T-cell (primary cell): ENCODE measurements at regions of chr7 and their contacts with region 1.

Region 1: DNA sequence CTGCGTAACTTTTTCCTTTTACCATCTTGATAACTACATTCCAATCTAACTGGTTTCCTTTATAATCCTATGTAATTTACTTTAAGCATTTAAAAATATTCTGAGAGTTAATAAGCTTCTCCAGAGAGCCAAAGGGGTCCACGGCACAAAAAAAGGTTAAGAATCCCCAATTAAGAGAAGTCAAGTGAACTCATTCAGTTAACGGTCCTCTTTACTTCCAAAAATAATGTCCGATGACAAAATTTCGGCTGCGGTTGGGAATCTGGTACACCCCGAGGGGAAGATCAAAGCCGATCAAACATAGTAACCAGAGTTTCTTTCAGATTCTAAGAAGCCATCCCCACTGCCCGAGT is 425 bp downstream of the ZC3HC1 start:
- DNase-seq: peak in 1 of 35 experiments; percentile 5
- ATAC-seq: no peak
- H3K4me3 ChIP-seq: peak overlapping the region; percentile 76 to 87
- H3K4me3 Mint-ChIP-seq: peak overlapping the region; percentile 98 to 99 (median 99)
- H3K27ac ChIP-seq: peak overlapping the region; percentile 58
- H3K27ac Mint-ChIP-seq: peak overlapping the region; percentile 82 to 91
- H3K4me1 ChIP-seq: peaks cover 5 to 13% of the 10 kb centered on the region in 2 experiments
- H3K4me1 Mint-ChIP-seq: peaks cover 8 to 19% (median 16%) of the 10 kb centered on the region in 3 donors
- H3K27me3 ChIP-seq: no peaks in the 10 kb centered on the region
- H3K27me3 Mint-ChIP-seq: no peaks in the 10 kb centered on the region

Region 2: DNA sequence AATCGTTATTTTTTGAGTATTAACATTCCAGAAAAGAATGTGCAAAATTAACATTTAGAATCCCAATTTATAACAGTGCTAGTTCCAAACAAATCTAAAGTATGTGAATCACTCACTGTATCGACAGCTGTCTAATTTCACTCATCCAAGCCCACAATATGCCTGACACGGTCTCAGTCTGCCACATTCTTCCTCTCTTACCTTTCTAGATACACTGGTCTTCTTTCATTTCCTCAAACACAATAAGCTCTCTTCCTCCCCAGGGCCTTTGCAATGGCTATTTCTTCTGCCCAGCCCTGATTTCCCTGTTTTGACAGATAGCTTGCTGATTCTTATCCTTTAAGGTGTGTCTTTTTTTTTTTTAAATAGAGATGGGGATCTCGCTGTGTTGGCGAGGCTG is 146.8 kb before region 1 on chr7:
- CTCF ChIA-PET with region 1: no interaction called
- POLR2A ChIA-PET with region 1: interaction called in 1 of 2 experiments, 13 read pairs
- DNase-seq: no peak
- ATAC-seq: no peak
- H3K4me3 ChIP-seq: no peak overlapping the region
- H3K4me3 Mint-ChIP-seq: peak overlapping the region in 1 of 3 donors; percentile 78
- H3K27ac ChIP-seq: no peak overlapping the region
- H3K27ac Mint-ChIP-seq: peak overlapping the region; percentile 25 to 87
- H3K4me1 ChIP-seq: peaks cover 30 to 41% of the 10 kb centered on the region in 2 experiments
- H3K4me1 Mint-ChIP-seq: peaks cover 83 to 86% (median 86%) of the 10 kb centered on the region in 3 donors
- H3K27me3 ChIP-seq: no peaks in the 10 kb centered on the region
- H3K27me3 Mint-ChIP-seq: no peaks in the 10 kb centered on the region

Region 3: DNA sequence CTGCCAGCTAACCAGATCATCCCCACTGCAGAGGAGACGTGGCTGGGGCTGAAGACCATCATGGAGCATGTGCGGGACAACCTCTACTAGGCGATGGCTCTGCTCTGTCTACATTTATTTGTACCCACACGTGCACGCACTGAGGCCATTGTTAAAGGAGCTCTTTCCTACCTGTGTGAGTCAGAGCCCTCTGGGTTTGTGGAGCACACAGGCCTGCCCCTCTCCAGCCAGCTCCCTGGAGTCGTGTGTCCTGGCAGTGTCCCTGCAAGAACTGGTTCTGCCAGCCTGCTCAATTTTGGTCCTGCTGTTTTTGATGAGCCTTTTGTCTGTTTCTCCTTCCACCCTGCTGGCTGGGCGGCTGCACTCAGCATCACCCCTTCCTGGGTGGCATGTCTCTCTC is 271.8 kb after region 1 on chr7:
- CTCF ChIA-PET with region 1: no interaction called
- POLR2A ChIA-PET with region 1: no interaction called
- DNase-seq: no peak
- ATAC-seq: no peak
- H3K4me3 ChIP-seq: no peak overlapping the region
- H3K4me3 Mint-ChIP-seq: no peak overlapping the region
- H3K27ac ChIP-seq: no peak overlapping the region
- H3K27ac Mint-ChIP-seq: no peak overlapping the region
- H3K4me1 ChIP-seq: no peaks in the 10 kb centered on the region
- H3K4me1 Mint-ChIP-seq: no peaks in the 10 kb centered on the region
- H3K27me3 ChIP-seq: no peaks in the 10 kb centered on the region
- H3K27me3 Mint-ChIP-seq: no peaks in the 10 kb centered on the region